A549 (cell line): ENCODE measurements at regions of chr1 and their contacts with region 1.

Region 1: DNA sequence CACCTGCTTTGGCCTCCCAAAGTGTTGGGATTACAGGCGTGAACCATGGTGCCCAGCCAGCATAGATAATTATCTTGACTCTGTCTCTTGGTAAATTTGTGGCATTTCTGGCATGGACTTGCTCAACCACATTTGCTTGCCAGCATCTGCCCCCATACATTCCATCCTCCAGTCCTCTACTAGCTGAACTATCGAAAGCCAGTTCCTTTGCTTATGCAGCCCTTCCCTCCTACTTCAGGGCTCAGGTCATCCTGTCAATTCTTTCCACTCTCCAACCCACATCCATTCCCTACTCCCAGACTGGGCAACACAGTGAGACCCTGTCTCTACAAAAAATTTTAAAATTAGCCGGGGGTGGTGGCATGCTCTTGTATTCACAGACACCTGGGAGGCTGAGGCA is 13.0 kb upstream of the UQCRHL start:
- DNase-seq: no peak
- ATAC-seq: peak in 1 of 2 experiments; percentile 38; a peak in 1 of 6 replicates
- H3K4me3 ChIP-seq: no peak overlapping the region
- H3K27ac ChIP-seq: no peak overlapping the region
- H3K4me1 ChIP-seq: no peaks in the 10 kb centered on the region
- CTCF ChIP-seq: no peak
- EP300 ChIP-seq: no peak
- POLR2A ChIP-seq: no peak
- RAD21 ChIP-seq: no peak

Region 2: DNA sequence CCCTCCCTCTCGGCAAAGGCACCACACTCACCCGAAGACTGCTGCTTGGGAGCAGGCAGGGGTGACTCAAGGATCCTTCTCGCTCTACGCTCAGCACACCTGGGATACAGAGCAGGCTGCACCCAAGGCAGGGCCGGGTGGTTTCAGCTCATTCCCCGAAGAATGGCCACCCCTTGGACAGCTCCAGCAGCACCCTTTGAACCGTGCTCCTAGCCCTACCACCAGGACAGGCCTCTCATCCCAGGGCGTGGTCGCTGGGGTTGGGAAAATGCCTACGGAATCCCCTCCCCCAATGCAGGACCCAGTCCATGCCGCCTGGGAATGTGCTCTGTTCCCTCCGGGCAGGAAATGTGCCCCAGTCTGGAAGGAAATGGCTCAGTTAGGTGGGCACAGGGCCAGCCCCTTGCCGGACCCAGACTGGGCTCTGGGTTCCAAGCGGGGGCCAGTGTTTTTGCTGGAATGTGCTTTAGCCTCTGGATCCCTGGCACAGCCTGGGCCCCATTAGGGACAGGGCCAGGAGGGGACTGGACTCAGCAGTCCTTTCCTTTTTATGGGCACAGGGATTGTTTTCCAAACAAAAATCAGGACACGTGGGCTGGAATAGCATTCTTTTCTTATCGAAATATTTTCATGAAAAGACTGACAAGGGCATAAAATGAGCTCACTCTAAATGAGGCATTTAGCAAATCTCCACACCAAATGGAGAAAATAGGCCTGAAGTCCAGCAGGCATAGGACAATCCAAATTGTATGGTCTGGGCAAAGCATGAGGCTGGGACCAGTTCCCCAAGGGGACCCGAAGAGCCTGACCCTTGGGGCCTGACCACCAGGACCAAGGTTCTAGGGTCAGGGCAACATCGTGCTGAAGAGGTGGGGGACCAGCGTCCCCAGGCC is 70.8 kb before region 1 on chr1:
- CTCF ChIA-PET with region 1: no interaction called
- POLR2A ChIA-PET with region 1: no interaction called
- DNase-seq: no peak
- ATAC-seq: peak in 1 of 2 experiments; percentile 14; a peak in 2 of 6 replicates
- H3K4me3 ChIP-seq: no peak overlapping the region
- H3K27ac ChIP-seq: peak overlapping the region; percentile 24 to 75; a peak in 4 of 6 replicates
- H3K4me1 ChIP-seq: peaks cover 16% of the 10 kb centered on the region
- CTCF ChIP-seq: no peak
- EP300 ChIP-seq: no peak
- POLR2A ChIP-seq: no peak
- RAD21 ChIP-seq: no peak

Region 3: GRCh38 chr1:15994590-15995351 is 174.3 kb after region 1 on chr1:
- CTCF ChIA-PET with region 1: interaction called, 13 read pairs
- POLR2A ChIA-PET with region 1: no interaction called
- DNase-seq: peak; percentile 58 to 64
- ATAC-seq: peak; percentile 83 to 93
- H3K4me3 ChIP-seq: no peak overlapping the region
- H3K27ac ChIP-seq: no peak overlapping the region
- H3K4me1 ChIP-seq: no peaks in the 10 kb centered on the region
- CTCF ChIP-seq: peak; percentile 45
- EP300 ChIP-seq: no peak
- POLR2A ChIP-seq: no peak
- RAD21 ChIP-seq: peak; percentile 59 to 68